ENCODE measurements at regions of chr3 and their contacts with region 1.

Region 1: DNA sequence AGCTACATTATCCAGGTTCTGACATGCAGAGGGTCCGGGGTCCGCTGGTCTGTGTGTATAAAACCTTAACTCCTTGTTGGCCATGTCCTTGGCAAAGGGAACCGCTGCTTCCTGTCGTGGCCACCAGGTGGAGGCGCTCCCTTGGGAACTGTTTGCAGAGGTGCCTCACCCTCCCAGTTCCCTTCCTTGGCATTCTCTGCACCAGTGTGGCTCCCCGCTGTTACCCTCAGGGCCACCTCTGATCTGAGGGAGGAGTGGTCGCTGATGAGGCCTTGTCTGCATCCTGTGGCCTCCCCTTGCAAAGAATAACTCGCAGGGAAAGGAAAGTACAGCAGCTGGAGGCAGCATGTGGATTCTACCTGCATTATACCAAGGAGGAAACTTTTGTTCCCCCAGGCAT is 89.6 kb downstream of the CHRD start:
- DNase-seq: peak; percentile 25
- ATAC-seq: peak; percentile 68
- H3K4me3 ChIP-seq: no peak overlapping the region
- H3K27ac ChIP-seq: no peak overlapping the region
- H3K4me1 ChIP-seq: peaks cover 10% of the 10 kb centered on the region
- H3K27me3 ChIP-seq: peaks cover 1 to 34% of the 10 kb centered on the region in 2 experiments; a peak in 3 of 5 replicates
- CTCF ChIP-seq: peak; percentile 76
- EP300 ChIP-seq: no peak
- POLR2A ChIP-seq: no peak
- RAD21 ChIP-seq: no peak

Region 2: GRCh38 chr3:184448311-184449160 is 20.9 kb before region 1 on chr3:
- CTCF ChIA-PET with region 1: no interaction called
- POLR2A ChIA-PET with region 1: no interaction called
- in situ Hi-C with region 1: no loop called
- intact Hi-C with region 1: no loop called
- DNase-seq: no peak
- ATAC-seq: no peak
- H3K4me3 ChIP-seq: no peak overlapping the region
- H3K27ac ChIP-seq: no peak overlapping the region
- H3K4me1 ChIP-seq: no peaks in the 10 kb centered on the region
- H3K27me3 ChIP-seq: no peaks in the 10 kb centered on the region
- CTCF ChIP-seq: no peak
- EP300 ChIP-seq: no peak
- POLR2A ChIP-seq: no peak
- RAD21 ChIP-seq: no peak

Region 3: GRCh38 chr3:184513276-184514170 is 44.1 kb after region 1 on chr3:
- CTCF ChIA-PET with region 1: interaction called, 8 read pairs
- POLR2A ChIA-PET with region 1: no interaction called
- in situ Hi-C with region 1: no loop called
- intact Hi-C with region 1: loop called (anchors 2 kb)
- DNase-seq: peak; percentile 58
- ATAC-seq: peak; percentile 100
- H3K4me3 ChIP-seq: peak overlapping the region; percentile 26 to 70 (median 45); a peak in 4 of 6 replicates
- H3K27ac ChIP-seq: no peak overlapping the region
- H3K4me1 ChIP-seq: no peaks in the 10 kb centered on the region; the same call in 1 of the 2 replicates
- H3K27me3 ChIP-seq: peaks cover 8 to 58% of the 10 kb centered on the region in 2 experiments; a peak in 4 of 5 replicates
- CTCF ChIP-seq: peak; percentile 92
- EP300 ChIP-seq: no peak
- POLR2A ChIP-seq: no peak
- RAD21 ChIP-seq: peak; percentile 81